Panc1 (cell line): ENCODE measurements at regions of chr3 and their contacts with region 1.

Region 1: DNA sequence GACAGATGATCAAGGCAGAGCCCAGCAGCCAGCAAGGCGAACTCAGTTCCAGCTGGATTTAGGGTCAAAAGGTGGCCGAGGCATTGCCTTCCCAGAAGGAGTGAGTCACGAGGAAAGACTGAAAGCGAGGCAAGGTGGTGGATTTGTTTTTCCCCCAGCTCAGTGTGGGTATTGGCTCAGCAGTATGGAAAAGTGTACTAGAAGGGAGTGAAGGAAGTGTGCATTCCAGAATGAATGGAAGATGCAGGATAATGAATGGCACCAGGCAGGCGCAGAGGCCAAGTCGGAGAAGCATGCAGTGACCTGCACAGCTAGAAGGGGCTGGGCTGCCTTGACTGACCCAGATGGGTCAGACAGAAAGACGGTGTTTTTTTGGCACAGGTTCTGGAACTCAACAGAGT is 46.3 kb downstream of the FOXP1 start:
- DNase-seq: no peak
- ATAC-seq: no peak
- H3K4me3 ChIP-seq: no peak overlapping the region
- H3K27ac ChIP-seq: no peak overlapping the region
- H3K4me1 ChIP-seq: no peaks in the 10 kb centered on the region
- H3K27me3 ChIP-seq: no peaks in the 10 kb centered on the region
- CTCF ChIP-seq: no peak

Region 2: GRCh38 chr3:71355862-71356261 is 181.3 kb before region 1 on chr3:
- CTCF ChIA-PET with region 1: no interaction called
- POLR2A ChIA-PET with region 1: no interaction called
- in situ Hi-C with region 1: no loop called
- intact Hi-C with region 1: no loop called
- DNase-seq: no peak
- ATAC-seq: no peak
- H3K4me3 ChIP-seq: no peak overlapping the region
- H3K27ac ChIP-seq: no peak overlapping the region
- H3K4me1 ChIP-seq: no peaks in the 10 kb centered on the region
- H3K27me3 ChIP-seq: no peaks in the 10 kb centered on the region
- CTCF ChIP-seq: no peak

Region 3: GRCh38 chr3:71406972-71407810 is 130.0 kb before region 1 on chr3:
- CTCF ChIA-PET with region 1: no interaction called
- POLR2A ChIA-PET with region 1: no interaction called
- in situ Hi-C with region 1: no loop called
- intact Hi-C with region 1: no loop called
- DNase-seq: no peak
- ATAC-seq: no peak
- H3K4me3 ChIP-seq: no peak overlapping the region
- H3K27ac ChIP-seq: no peak overlapping the region
- H3K4me1 ChIP-seq: no peaks in the 10 kb centered on the region
- H3K27me3 ChIP-seq: no peaks in the 10 kb centered on the region; the same call in 1 of the 2 replicates
- CTCF ChIP-seq: no peak

Region 4: GRCh38 chr3:71684046-71684753 is 147.0 kb after region 1 on chr3:
- CTCF ChIA-PET with region 1: interaction called, 10 read pairs
- POLR2A ChIA-PET with region 1: no interaction called
- in situ Hi-C with region 1: no loop called
- intact Hi-C with region 1: no loop called
- DNase-seq: no peak
- ATAC-seq: no peak
- H3K4me3 ChIP-seq: no peak overlapping the region
- H3K27ac ChIP-seq: no peak overlapping the region
- H3K4me1 ChIP-seq: no peaks in the 10 kb centered on the region
- H3K27me3 ChIP-seq: peaks cover 2% of the 10 kb centered on the region; the same call in 1 of the 2 replicates
- CTCF ChIP-seq: no peak